ENCODE measurements at regions of chr2 and their contacts with region 1.

Region 1: DNA sequence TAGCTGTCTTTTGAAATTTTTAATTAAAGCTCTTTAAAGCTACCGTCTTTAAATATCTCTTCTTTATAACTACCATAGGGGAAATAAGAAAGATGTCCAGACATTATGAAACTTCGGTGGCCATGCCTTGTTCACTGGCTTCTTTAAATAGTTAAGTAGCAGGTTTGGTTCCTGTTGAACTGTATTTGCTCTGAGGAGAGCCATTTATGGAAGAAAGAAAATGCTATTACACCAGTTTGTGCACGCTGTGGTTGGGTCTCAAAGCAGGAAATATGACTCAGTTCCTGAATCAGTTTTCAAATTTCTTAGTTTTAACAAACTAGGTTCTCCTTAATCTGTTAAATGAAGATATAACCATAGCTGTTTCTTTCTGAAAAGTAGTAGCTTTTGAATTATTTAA is 12.2 kb downstream of the ARPC2 start:
- DNase-seq: peak; percentile 77
- CTCF ChIP-seq: no peak

Region 2: GRCh38 chr2:218202266-218202665 is 27.0 kb before region 1 on chr2:
- CTCF ChIA-PET with region 1: no interaction called
- POLR2A ChIA-PET with region 1: no interaction called
- DNase-seq: no peak
- CTCF ChIP-seq: no peak

Region 3: DNA sequence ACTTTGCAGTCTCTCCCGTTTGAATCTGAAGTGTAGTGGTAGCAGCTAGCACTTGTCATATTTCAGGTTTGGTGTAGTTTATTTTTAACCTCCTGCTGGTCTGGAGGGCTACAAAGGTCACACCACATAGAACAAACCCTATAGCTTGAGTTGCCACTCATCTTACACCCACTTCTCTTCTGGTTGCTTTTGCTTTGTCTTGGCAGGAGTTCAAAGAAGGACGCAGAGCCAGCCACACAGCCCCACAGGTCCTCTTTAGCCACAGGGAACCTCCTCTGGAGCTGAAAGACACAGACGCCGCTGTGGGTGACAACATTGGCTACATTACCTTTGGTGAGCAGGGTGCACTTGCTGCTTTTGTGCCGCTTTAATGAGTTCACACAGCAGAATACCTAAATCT is 16.0 kb after region 1 on chr2:
- CTCF ChIA-PET with region 1: interaction called, 39 read pairs
- POLR2A ChIA-PET with region 1: no interaction called
- DNase-seq: no peak
- CTCF ChIP-seq: no peak

Measured in GM10248 (cell line).